ENCODE measurements at regions of chr3 and their contacts with region 1.

Region 1: GRCh38 chr3:41716471-41716870 is 245.4 kb downstream of the ULK4 start:
- DNase-seq: no peak
- H3K4me3 ChIP-seq: no peak overlapping the region
- H3K27ac ChIP-seq: no peak overlapping the region
- H3K4me1 ChIP-seq: no peaks in the 10 kb centered on the region
- H3K27me3 ChIP-seq: no peaks in the 10 kb centered on the region
- CTCF ChIP-seq: peak; percentile 36 to 56

Region 2: DNA sequence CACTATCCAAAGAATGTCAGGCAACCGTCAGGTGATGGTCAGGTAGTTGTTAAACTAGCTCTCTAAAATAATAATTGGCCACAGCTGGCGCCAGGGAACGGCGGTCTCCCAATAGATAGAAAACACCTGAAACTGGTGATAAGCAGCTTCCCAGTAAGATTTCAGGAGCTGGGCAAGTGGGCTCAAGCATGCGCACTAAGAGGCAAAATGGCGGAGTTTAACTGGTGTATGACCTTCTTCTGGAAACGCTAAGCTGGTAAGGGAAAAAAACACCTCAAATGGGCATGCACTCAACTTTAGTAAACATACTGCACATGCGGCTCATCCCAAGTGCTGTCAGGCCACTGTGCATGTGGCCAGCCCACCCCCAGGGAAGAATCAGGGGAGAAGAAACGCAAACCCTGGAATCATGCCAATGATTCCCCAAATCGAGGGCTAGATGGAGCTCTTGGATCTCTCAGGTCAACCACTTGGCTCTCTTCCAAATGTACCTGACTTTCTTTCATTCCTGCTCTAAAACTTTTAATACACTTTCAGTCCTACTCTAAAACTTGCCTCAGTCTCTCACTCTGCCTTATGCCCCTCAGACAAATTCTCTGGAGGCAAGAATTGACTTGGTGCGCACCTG is 996.7 kb before region 1 on chr3:
- CTCF ChIA-PET with region 1: no interaction called
- dilution Hi-C with region 1: no loop called
- in situ Hi-C with region 1: no loop called
- intact Hi-C with region 1: loop called (anchors 10 kb)
- DNase-seq: peak; percentile 55
- H3K4me3 ChIP-seq: no peak overlapping the region
- H3K27ac ChIP-seq: no peak overlapping the region
- H3K4me1 ChIP-seq: peaks cover 15% of the 10 kb centered on the region
- H3K27me3 ChIP-seq: no peaks in the 10 kb centered on the region
- CTCF ChIP-seq: peak; percentile 24 to 75

Region 3: DNA sequence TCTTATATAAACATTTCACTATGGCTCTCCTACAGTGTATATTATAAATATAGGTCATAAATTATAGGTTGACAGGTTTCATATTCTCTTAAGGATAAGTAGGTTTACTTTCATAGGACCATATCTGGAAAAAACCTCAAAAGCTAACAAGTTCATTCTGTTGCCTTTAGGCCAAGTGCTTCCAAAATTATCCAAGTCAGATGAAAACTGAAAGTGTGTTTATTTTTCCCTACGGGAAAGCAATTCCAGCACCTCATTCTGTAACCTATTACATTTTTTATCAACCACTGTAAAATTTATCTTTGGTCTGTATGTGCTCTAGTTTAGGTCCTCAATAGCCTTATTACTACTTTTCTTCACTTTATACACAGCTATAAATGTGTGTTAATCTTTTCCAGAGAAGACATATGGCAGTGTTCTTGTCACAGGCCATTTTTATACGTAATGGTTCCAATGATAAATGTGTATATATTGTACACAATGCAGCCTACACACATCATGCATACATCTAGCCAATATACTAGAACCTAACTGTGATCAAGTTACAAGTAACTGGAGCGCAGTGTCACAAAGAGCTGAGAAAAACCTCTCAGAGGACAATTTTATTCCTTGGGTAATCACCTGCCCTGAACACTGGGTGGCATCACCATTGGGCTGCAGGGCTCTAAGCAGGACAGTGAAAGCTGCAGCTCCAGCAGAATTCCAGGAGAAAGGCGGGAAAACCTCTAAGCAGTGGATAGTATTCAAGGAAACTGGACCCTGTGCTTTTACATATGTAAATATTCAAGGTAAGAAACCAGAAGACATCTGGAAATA is 265.8 kb before region 1 on chr3:
- CTCF ChIA-PET with region 1: no interaction called
- dilution Hi-C with region 1: no loop called
- in situ Hi-C with region 1: no loop called
- intact Hi-C with region 1: loop called (anchors 10 kb)
- DNase-seq: no peak
- H3K4me3 ChIP-seq: no peak overlapping the region
- H3K27ac ChIP-seq: no peak overlapping the region
- H3K4me1 ChIP-seq: no peaks in the 10 kb centered on the region
- H3K27me3 ChIP-seq: no peaks in the 10 kb centered on the region
- CTCF ChIP-seq: peak; percentile 13 to 44